Activated CD4-positive, alpha-beta memory T cell treated with anti-CD3 and anti-CD28 coated beads for 36 hours (primary cell): ENCODE measurements at regions of chr12 and their contacts with region 1.

Region 1: GRCh38 chr12:52980693-52981423 is 25.4 kb upstream of the EIF4B start:
- DNase-seq: peak; percentile 89
- H3K4me3 Mint-ChIP-seq: no peak overlapping the region
- H3K27ac Mint-ChIP-seq: peak overlapping the region; percentile 9
- H3K4me1 Mint-ChIP-seq: no peaks in the 10 kb centered on the region
- H3K27me3 Mint-ChIP-seq: peaks cover 34% of the 10 kb centered on the region

Region 2: GRCh38 chr12:52372216-52373154 is 608.4 kb before region 1 on chr12:
- CTCF ChIA-PET with region 1: interaction called, 4 read pairs
- POLR2A ChIA-PET with region 1: no interaction called
- intact Hi-C with region 1: loop called (anchors 10 kb)
- DNase-seq: peak; percentile 68
- H3K4me3 Mint-ChIP-seq: no peak overlapping the region
- H3K27ac Mint-ChIP-seq: no peak overlapping the region
- H3K4me1 Mint-ChIP-seq: no peaks in the 10 kb centered on the region
- H3K27me3 Mint-ChIP-seq: peaks cover 15% of the 10 kb centered on the region

Region 3: DNA sequence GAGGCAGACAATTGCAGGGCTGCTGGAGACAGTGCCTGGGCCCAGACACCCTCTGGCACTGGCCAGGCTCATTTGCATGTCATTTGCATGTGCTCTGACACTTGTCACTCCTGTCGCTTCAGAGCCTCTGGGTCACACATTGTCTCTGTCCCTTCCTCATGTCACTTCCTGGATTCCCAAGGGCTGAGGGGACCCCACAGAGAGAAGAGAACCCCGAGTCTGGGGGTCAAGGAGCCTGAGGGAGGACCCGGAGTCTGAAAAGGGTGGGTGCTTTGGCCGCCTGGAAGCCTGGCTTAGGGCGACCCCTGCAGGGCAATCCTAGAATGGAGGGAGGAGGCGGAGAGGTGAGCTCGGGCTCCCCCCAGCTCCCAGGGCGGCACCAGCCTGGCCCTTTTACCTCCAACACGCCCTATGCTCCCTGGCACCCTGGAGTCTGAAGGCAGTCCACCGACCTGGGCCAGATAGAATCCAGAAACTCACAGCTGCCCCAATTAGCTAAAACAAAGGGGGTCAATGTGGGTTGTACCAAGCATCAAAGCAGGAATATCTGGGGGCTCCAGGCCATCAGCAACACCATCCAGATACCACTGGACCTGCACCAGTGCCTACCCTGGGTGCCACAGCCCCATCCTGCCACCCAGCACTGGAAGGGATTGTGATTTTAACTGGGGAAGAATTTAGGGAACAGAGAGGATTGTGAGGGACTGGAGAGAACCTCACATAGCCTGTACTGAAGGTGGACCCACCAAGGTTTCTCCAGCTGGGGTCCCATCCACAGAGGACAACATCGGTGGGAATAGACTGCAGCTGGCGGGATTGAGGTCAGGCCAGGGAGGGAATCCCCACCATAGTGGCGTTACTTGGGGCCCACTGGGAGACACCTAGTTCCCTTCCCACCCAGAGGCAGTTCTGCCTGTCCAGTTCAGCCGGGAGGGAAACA is 110.2 kb before region 1 on chr12:
- CTCF ChIA-PET with region 1: interaction called, 16 read pairs
- POLR2A ChIA-PET with region 1: no interaction called
- intact Hi-C with region 1: no loop called
- DNase-seq: peak; percentile 83
- H3K4me3 Mint-ChIP-seq: no peak overlapping the region
- H3K27ac Mint-ChIP-seq: no peak overlapping the region
- H3K4me1 Mint-ChIP-seq: peaks cover 26% of the 10 kb centered on the region
- H3K27me3 Mint-ChIP-seq: peaks cover 3% of the 10 kb centered on the region

Region 4: GRCh38 chr12:52969828-52970569 is 10.9 kb before region 1 on chr12:
- CTCF ChIA-PET with region 1: interaction called, 10 read pairs
- POLR2A ChIA-PET with region 1: no interaction called
- intact Hi-C with region 1: no loop called
- DNase-seq: no peak
- H3K4me3 Mint-ChIP-seq: no peak overlapping the region
- H3K27ac Mint-ChIP-seq: no peak overlapping the region
- H3K4me1 Mint-ChIP-seq: no peaks in the 10 kb centered on the region
- H3K27me3 Mint-ChIP-seq: peaks cover 6% of the 10 kb centered on the region